H1 (cell line): ENCODE measurements at regions of chr22 and their contacts with region 1.

Region 1: DNA sequence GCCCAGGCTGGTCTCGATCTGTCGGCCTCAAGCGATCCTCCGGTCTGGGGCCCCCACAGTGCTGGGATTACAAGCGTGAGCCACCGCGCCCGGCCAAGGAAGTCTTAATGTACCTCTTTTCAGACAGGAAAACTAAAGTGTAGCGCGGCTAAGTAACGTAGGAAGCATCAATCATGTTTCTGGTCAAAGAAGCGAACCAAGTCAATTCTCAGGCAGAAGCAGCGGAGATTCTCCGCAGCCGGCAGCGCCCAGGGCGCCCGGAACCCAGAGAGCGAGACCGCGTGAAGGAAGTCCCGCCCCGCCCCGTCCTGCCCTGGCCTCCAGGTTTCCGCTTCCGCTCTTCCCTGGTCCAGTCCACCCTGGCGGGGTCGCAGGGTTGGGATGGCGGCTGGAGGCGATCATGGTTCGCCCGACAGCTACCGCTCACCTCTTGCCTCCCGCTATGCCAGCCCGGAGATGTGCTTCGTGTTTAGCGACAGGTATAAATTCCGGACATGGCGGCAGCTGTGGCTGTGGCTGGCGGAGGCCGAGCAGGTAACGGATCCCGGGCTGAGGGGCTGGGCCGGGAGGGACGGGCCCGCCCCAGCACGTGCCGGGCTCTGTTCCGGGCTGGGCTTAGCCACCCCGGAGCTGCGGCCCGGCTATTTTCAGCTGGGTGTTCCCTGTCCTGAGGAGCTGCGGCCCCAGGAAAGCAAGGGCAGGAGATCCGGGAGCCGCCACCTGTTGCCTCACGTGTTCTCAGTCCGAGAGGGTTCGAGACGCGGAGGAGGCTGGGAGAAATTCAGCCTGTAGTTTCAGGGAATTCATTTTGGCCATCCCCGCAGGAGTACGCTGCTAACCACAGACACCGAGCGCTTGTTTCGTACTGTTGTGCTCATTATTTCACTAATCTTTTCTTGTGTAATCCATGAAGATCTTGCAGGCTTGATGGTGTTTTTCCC is at the start of gene ADSL:
- DNase-seq: peak; percentile 58 to 91
- H3K4me3 ChIP-seq: peak within 1 kb of the TSS; percentile 80 to 99 (median 90)
- H3K27ac ChIP-seq: peak within 1 kb of the TSS; percentile 63
- H3K4me1 ChIP-seq: peaks cover 0 to 6% (median 0%) of the 10 kb centered on the region in 4 experiments; a peak in 3 of 7 replicates
- H3K27me3 ChIP-seq: no peaks in the 10 kb centered on the region
- CTCF ChIP-seq: no peak
- EP300 ChIP-seq: peak in 1 of 2 experiments; percentile 22; a peak in 1 of 3 replicates
- POLR2A ChIP-seq: peak; percentile 89 to 99
- RAD21 ChIP-seq: no peak
- total RNA-seq, gene ADSL: 180 and 197 TPM in 2 replicates

Region 2: DNA sequence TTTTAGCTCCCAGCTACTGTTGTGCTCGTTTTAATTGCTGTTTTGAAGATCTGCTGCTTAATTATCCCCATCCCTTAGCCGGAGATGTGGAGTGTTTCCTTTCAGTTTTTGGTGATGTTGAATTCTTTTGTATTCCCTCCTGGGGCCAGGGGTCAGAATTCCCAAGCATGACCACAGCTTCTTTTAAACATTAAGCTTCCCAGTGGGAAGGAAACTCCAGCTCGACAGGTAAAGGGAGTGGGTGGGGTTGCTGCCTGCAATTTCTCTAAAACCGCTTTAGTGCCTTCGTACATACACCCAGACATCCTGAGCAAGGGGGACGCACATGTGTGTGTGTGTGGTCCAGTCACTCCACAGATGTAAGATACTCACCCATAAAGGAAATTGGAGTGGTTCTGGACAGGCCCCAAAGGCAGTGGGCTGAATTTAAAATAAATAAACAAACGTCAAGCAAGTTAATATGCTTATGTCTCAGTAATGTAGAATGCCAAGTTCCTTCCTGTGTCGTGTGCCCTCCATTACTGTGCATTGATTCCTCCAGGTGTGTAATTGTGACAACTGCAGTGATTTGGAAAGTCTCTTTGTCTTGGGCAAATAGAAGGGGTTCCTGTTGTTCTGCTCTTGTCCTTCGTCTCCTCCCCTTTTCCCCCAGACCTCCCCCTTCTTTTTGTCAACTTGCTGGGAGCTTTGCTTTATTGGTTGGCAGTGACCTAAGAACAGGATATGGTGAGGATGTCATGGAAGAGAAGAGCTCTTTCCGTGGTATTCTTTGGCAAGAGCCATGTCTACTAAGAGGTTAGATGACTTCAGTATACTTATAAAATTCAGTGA is 19.3 kb before region 1 on chr22:
- CTCF ChIA-PET with region 1: interaction called, 16 read pairs
- POLR2A ChIA-PET with region 1: interaction called, 21 read pairs
- DNase-seq: no peak
- H3K4me3 ChIP-seq: peak overlapping the region in 1 of 4 experiments; percentile 17; a peak in 1 of 8 replicates
- H3K27ac ChIP-seq: peak overlapping the region; percentile 83
- H3K4me1 ChIP-seq: peaks cover 6 to 23% (median 15%) of the 10 kb centered on the region in 4 experiments
- H3K27me3 ChIP-seq: no peaks in the 10 kb centered on the region
- CTCF ChIP-seq: no peak
- EP300 ChIP-seq: no peak
- POLR2A ChIP-seq: no peak
- RAD21 ChIP-seq: no peak

Region 3: GRCh38 chr22:40332319-40332781 is 14.1 kb before region 1 on chr22:
- CTCF ChIA-PET with region 1: interaction called, 16 read pairs
- POLR2A ChIA-PET with region 1: interaction called, 21 read pairs
- DNase-seq: no peak
- H3K4me3 ChIP-seq: no peak overlapping the region
- H3K27ac ChIP-seq: no peak overlapping the region; the same call in 1 of the 2 replicates
- H3K4me1 ChIP-seq: peaks cover 2 to 19% (median 14%) of the 10 kb centered on the region in 4 experiments; a peak in 6 of 7 replicates
- H3K27me3 ChIP-seq: no peaks in the 10 kb centered on the region
- CTCF ChIP-seq: no peak
- EP300 ChIP-seq: no peak
- POLR2A ChIP-seq: no peak
- RAD21 ChIP-seq: no peak

Region 4: GRCh38 chr22:40363059-40363458 is 16.6 kb after region 1 on chr22:
- CTCF ChIA-PET with region 1: interaction called, 18 read pairs
- POLR2A ChIA-PET with region 1: interaction called, 5 read pairs
- DNase-seq: no peak
- H3K4me3 ChIP-seq: no peak overlapping the region
- H3K27ac ChIP-seq: no peak overlapping the region
- H3K4me1 ChIP-seq: no peaks in the 10 kb centered on the region
- H3K27me3 ChIP-seq: no peaks in the 10 kb centered on the region
- CTCF ChIP-seq: no peak
- EP300 ChIP-seq: no peak
- POLR2A ChIP-seq: no peak
- RAD21 ChIP-seq: no peak

Region 5: DNA sequence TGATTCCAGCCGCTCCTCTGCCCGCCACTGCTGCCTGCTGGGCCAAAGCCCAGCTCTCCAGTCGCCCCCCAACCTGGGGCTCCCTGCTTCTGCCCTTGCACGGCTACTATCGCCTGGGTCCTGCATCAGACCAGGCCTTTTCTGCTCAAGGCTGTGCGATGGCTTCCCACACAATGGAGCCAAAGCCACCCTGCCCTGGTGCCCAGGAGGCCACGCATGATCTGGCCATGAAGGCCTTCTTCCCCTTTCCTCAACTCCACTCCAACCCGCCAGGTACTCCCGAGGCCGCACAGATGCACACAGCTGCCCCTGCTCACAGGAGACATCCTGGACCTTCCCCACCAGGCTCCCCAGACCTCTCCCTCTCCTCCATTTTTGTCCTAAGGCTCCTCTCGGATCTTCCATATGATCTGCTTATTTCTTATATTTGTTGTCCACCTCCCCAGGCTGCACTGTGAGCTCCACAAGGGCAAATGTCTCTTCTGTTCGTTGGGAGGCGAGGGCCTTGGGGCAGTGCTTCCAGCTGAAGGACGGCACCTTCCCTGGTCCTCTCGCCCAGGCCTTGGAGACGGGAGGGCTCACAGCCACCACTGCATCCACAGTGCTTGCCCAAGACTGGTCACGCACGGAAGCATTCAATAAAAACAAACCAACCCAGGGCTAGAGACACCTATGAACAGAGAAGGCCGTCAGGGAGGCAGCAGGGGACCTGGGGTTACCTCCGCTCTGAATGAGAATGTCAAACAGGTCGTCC is 70.0 kb after region 1 on chr22:
- CTCF ChIA-PET with region 1: no interaction called
- POLR2A ChIA-PET with region 1: no interaction called
- DNase-seq: no peak
- H3K4me3 ChIP-seq: no peak overlapping the region
- H3K27ac ChIP-seq: no peak overlapping the region
- H3K4me1 ChIP-seq: no peaks in the 10 kb centered on the region; a peak in 1 of 7 replicates
- H3K27me3 ChIP-seq: no peaks in the 10 kb centered on the region
- CTCF ChIP-seq: no peak
- EP300 ChIP-seq: no peak
- POLR2A ChIP-seq: no peak
- RAD21 ChIP-seq: no peak